Psoas muscle (tissue), 8 donors: ENCODE measurements at regions of chr1 and their contacts with region 1.

Region 1: DNA sequence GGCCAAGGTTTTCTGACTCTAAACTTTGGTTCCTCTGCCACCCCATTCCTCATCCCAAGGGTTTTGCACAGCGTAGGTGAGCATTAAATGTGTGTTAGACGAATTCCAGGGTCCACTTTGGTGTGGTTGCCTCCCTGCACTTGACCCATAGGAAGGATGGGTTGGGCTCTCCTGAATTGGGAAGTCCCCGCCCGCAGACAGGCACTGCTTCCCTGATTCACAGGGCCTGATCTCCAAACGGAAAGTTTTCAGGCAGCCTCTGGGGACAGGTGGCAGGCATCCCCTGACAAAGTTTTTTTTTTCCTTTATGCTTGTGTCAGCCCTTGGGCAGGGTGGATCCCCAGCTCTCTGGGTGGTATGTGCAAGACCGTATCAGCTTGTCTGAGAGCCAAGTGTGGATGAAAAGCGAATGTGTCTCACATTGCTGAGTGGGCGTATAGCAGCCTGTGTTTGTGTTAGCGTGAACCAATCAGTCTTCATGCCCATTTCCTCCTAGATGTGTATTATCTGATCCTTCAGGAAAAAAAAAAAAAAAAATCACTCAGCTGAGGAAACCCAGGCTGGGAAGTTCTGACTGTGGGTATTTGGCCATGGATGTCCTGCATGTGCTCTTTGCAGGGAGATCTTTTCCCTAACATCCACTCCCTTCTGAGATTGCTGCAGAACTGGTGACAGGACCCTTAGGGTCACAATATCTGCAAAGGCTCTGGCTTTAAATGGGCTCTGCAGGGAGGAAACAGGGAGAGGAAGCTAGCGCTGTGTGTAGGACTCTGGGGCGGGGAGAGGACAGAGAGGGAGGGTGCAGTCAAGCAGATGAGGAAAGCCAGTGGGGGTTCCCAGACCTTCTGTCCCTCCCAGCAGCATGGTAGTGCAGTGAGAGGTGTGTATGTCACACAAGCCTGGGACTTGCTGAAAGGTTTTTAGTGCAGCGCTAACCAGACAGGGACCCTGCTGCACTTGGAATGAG is 42.2 kb upstream of the TRABD2B start:
- DNase-seq: no peak
- ATAC-seq: no peak
- H3K4me3 ChIP-seq: no peak overlapping the region
- H3K27ac ChIP-seq: no peak overlapping the region
- H3K4me1 ChIP-seq: no peaks in the 10 kb centered on the region
- H3K27me3 ChIP-seq: peaks cover 0 to 4% (median 0%) of the 10 kb centered on the region in 3 donors
- CTCF ChIP-seq: no peak

Region 2: DNA sequence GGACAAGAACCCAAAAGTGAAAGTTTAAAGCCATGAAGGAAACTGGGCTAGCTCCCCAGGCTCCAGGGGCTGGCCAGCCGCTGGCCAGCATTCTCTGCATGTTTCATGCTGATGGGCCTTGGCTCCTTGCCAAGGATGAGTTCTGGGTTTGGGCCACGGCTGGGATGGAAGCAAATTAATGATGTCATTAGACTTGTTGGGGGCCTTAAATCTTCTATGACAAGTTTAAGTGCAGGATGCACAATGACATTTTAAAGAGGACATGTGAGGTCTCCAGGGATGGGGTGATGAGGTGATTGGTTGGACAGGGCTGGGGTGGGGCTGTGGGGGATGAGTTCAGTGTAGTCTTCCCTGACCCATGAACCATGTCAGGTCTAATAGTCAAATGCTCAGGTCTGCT is 241.8 kb before region 1 on chr1:
- intact Hi-C with region 1: loop called in 1 of 2 experiments (anchors 10 kb)
- DNase-seq: peak in 1 of 2 donors; percentile 54
- ATAC-seq: peak in 1 of 4 donors; percentile 24
- H3K4me3 ChIP-seq: no peak overlapping the region
- H3K27ac ChIP-seq: no peak overlapping the region
- H3K4me1 ChIP-seq: no peaks in the 10 kb centered on the region
- H3K27me3 ChIP-seq: no peaks in the 10 kb centered on the region
- CTCF ChIP-seq: no peak